Calu3 (cell line): ENCODE measurements at regions of chr12 and their contacts with region 1.

Region 1: GRCh38 chr12:14239350-14239934 is 126.0 kb upstream of the ATF7IP start:
- DNase-seq: peak; percentile 60
- H3K4me3 Mint-ChIP-seq: peak overlapping the region; percentile 64
- H3K27ac Mint-ChIP-seq: peak overlapping the region; percentile 93
- H3K4me1 Mint-ChIP-seq: peaks cover 34% of the 10 kb centered on the region
- H3K27me3 Mint-ChIP-seq: no peaks in the 10 kb centered on the region
- CTCF ChIP-seq: peak; percentile 26

Region 2: GRCh38 chr12:14257734-14258574 is 18.5 kb after region 1 on chr12:
- CTCF ChIA-PET with region 1: no interaction called
- intact Hi-C with region 1: loop called (anchors 2 kb)
- DNase-seq: peak; percentile 95
- H3K4me3 Mint-ChIP-seq: peak overlapping the region; percentile 24
- H3K27ac Mint-ChIP-seq: peak overlapping the region; percentile 95
- H3K4me1 Mint-ChIP-seq: peaks cover 64% of the 10 kb centered on the region
- H3K27me3 Mint-ChIP-seq: no peaks in the 10 kb centered on the region
- CTCF ChIP-seq: no peak

Region 3: DNA sequence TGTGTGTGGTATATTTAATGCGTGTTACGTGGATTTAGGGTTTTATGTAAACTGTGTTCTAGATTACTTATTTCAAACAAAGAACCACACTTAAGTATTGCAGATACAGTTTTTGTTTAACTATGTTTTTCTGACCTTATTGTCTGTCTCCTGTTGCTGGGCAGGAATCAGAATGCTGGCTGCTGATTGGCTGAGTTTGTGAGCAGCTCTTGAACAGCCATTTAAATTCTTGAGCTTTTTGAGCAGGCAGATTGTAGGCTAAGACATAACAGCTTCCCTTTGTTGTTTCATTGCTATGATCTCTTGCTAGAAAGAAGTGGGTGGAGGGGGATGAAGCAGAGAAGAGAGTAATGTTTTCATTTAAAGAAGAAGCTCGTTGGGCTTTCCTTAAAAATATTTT is 178.3 kb after region 1 on chr12:
- CTCF ChIA-PET with region 1: interaction called, 17 read pairs
- intact Hi-C with region 1: loop called (anchors 1 kb)
- DNase-seq: peak; percentile 70
- H3K4me3 Mint-ChIP-seq: peak overlapping the region; percentile 43
- H3K27ac Mint-ChIP-seq: peak overlapping the region; percentile 77
- H3K4me1 Mint-ChIP-seq: peaks cover 8% of the 10 kb centered on the region
- H3K27me3 Mint-ChIP-seq: no peaks in the 10 kb centered on the region
- CTCF ChIP-seq: no peak

Region 4: DNA sequence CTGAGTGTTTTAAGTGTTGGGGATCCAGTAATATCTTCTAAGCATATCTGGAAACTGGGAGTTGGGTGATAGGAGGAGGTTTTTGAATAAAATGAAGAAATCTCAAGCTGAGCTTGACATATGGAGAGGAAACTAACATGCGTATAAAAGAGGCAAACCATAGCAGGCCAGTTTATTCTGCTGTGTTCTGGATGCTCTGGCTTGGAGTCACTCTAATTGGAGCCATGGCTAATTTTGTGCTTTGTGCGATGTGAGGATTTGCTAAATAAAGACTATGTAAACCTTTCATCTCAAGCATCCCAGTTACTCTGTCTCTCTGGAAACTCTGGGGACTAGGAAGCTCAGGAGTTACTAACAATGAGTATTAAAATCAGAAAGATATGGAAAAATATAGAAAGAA is 192.5 kb after region 1 on chr12:
- CTCF ChIA-PET with region 1: no interaction called
- intact Hi-C with region 1: no loop called
- DNase-seq: no peak
- H3K4me3 Mint-ChIP-seq: no peak overlapping the region
- H3K27ac Mint-ChIP-seq: no peak overlapping the region
- H3K4me1 Mint-ChIP-seq: peaks cover 6% of the 10 kb centered on the region
- H3K27me3 Mint-ChIP-seq: no peaks in the 10 kb centered on the region
- CTCF ChIP-seq: no peak

Region 5: GRCh38 chr12:14567351-14568162 is 328.1 kb after region 1 on chr12 and contains the start of gene PLBD1:
- CTCF ChIA-PET with region 1: no interaction called
- intact Hi-C with region 1: loop called (anchors 5 kb)
- DNase-seq: peak; percentile 69
- H3K4me3 Mint-ChIP-seq: peak within 1 kb of the TSS; percentile 95
- H3K27ac Mint-ChIP-seq: peak within 1 kb of the TSS; percentile 97
- H3K4me1 Mint-ChIP-seq: peaks cover 37% of the 10 kb centered on the region
- H3K27me3 Mint-ChIP-seq: no peaks in the 10 kb centered on the region
- CTCF ChIP-seq: no peak
- total RNA-seq, gene PLBD1: 75.3 and 98.1 TPM in 2 replicates

Region 6: DNA sequence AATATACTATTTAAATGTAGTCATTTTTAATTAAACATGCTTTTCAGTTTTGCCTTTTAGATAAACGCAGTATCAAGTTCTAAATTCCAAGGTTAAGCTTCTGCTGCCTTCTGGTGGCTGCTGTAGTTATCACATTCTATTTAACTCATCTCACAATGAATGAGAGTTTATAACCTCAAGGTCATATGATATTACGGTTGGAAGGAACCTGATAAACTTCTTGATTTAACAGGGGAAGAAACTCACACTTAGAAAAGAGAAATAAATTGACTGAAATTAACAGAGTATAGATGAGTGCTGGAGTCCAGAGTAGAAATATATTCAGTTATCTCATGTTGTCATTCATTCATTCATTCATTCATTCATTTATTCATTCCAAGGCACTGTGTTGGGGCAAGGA is 425.1 kb after region 1 on chr12:
- CTCF ChIA-PET with region 1: interaction called, 4 read pairs
- intact Hi-C with region 1: loop called (anchors 1 kb)
- DNase-seq: peak; percentile 37
- H3K4me3 Mint-ChIP-seq: no peak overlapping the region
- H3K27ac Mint-ChIP-seq: no peak overlapping the region
- H3K4me1 Mint-ChIP-seq: no peaks in the 10 kb centered on the region
- H3K27me3 Mint-ChIP-seq: no peaks in the 10 kb centered on the region
- CTCF ChIP-seq: no peak